OCI-LY7 (cell line): ENCODE measurements at regions of chr20 and their contacts with region 1.

Region 1: DNA sequence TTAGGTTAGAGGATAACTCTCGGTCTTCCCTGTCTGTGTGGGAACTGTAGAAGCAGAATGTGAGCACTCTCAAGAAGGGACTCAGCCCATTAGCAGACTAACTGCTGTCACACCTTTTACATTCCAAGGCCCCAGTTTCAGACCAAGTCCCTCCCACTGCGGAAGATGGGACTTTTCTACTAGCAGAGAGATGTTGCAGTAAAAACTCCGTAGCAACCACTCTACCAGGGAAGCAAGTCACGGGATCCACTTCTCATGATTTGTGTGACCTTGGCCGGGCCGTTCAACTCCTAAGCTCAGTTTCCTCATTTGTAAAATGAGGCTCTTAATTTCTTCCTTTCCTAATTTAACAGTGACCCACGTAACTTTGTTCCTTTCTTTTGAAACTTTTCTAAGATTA is 77.1 kb upstream of the SLC4A11 start:
- DNase-seq: no peak
- H3K4me3 ChIP-seq: no peak overlapping the region
- H3K27ac ChIP-seq: no peak overlapping the region
- H3K4me1 ChIP-seq: no peaks in the 10 kb centered on the region
- CTCF ChIP-seq: no peak

Region 2: GRCh38 chr20:3051385-3052019 is 264.6 kb before region 1 on chr20:
- CTCF ChIA-PET with region 1: no interaction called
- POLR2A ChIA-PET with region 1: interaction called, 4 read pairs
- intact Hi-C with region 1: loop called (anchors 1 kb)
- DNase-seq: no peak
- H3K4me3 ChIP-seq: no peak overlapping the region
- H3K27ac ChIP-seq: no peak overlapping the region
- H3K4me1 ChIP-seq: peaks cover 3% of the 10 kb centered on the region
- CTCF ChIP-seq: no peak

Region 3: DNA sequence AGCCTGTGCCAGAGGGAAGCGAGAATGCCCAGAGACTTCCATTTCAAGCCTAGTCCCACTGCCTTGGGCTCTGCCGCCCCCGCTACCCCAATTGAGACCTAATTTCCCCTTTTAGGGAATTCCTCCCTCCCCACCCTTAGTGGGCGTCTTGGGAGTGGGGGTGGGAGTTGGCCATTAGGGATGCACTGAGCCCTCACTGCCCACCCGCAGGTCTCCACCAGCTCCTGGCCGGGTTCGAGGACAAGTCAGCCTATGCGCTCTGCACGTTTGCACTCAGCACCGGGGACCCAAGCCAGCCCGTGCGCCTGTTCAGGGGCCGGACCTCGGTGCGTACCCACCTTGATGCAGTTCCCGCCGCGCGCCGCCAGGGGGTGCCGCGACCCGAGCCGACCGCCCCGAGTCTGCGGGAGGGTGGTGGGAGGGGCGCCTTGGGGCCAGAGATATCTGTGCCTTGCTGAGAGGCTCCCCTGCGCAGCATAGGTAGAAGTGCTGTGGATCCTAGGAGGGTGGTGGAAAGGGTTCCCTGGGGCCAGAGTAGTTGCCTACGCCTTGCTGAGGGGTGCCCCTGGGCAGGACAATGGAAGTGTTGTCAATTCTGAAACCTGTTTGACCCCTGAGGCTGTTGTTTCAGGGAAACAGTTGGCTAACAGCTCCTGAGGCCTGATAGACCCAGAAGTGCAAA is 97.7 kb before region 1 on chr20:
- CTCF ChIA-PET with region 1: no interaction called
- POLR2A ChIA-PET with region 1: no interaction called
- intact Hi-C with region 1: loop called (anchors 2 kb)
- DNase-seq: peak; percentile 43
- H3K4me3 ChIP-seq: no peak overlapping the region
- H3K27ac ChIP-seq: no peak overlapping the region
- H3K4me1 ChIP-seq: peaks cover 15% of the 10 kb centered on the region
- CTCF ChIP-seq: peak; percentile 78